ENCODE measurements at regions of chrX and their contacts with region 1.

Region 1: DNA sequence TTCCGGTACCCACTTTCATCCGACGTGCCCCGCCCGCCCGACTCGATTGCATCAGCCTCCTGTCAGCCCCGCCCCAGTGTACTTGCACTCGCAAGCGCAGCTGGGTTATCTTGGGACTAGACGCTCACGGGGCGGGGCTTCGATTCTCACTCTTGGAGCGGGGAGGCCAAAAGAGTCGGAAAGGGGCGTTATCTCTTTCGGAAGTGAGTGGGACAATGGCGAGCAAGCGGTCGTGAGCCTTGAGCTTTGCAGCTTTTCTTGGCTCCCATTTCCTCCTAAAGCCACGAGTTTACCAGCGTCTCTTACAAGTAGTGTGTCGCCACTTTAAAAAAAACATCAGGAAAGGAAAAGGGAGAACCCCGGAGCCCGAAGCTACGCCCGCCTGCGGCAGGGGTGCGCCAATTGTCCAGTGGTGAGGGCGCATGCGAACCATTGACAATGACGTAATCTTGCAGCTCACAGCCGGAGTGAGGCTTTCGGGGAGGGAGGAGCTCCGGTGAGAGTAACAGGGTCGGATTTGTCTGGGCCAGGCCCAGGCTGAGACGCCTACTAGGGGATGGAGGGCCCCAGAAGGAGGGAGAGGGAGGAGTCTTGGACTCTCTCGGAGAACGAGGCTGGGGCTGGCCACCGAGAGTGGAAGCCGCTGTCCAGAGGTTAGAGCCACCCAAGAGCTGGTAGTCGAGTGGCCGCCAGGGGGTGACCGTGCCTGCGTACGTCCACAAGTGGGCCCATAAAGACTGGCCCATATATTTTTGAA is 109.5 kb downstream of the GNL3L start:
- DNase-seq: peak; percentile 89 to 97 (median 97)
- H3K4me3 ChIP-seq: peak overlapping the region in 2 of 4 donors; percentile 13 to 51
- H3K27ac ChIP-seq: peak overlapping the region; percentile 77 to 93 (median 89)
- H3K4me1 ChIP-seq: no peaks in the 10 kb centered on the region
- H3K27me3 ChIP-seq: no peaks in the 10 kb centered on the region
- CTCF ChIP-seq: peak; percentile 53 to 75 (median 68)
- POLR2A ChIP-seq: peak; percentile 11 to 74

Region 2: DNA sequence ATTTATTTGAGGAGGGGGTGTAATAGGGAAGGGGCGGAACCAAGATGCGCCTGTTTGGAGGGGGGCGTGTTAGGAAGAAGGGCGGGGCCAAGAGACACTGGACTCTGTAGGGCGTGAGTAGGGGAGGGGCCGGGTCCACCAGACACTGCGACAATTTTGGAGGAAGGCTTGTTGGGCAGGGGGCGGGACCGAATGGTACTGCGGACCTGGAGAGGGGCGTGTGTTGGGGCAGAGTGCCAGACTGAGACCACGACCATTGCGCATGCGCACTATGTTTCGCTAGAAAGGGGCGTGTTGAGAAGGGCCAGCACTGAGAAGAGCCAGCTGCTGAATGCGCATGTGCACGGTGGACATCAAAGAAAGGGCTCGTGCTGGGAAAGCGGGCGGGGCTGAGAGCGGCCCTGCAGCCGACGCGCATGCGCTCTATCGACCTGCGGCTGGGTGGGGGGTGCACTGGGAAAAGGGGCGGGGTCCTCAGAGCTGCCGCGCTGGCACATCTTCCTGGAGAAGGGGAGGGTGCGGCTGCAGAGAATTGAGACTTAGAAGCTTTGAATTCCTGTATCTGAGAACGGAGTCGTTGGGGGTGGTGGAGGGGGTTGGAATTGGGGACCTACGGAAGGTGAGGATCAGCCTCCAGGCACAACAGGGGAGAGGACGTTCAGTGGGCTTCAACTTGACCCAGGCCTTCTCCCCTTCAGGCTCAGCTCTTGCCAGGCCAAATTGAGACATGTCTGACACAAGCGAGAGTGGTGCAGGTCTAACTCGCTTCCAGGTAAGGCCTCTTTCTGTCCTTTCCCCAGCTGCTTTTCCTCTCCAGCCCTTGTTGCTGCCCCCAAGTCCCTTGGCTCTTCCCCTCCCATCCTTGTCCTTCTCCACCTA is 169.3 kb after region 1 on chrX:
- intact Hi-C with region 1: loop called in 1 of 2 experiments (anchors 10 kb)
- DNase-seq: peak; percentile 90 to 97 (median 95)
- H3K4me3 ChIP-seq: peak overlapping the region in 3 of 4 donors; percentile 49 to 78 (median 70)
- H3K27ac ChIP-seq: peak overlapping the region in 4 of 5 donors; percentile 57 to 89 (median 76)
- H3K4me1 ChIP-seq: peaks cover 9 to 12% of the 10 kb centered on the region in 2 donors
- H3K27me3 ChIP-seq: no peaks in the 10 kb centered on the region
- CTCF ChIP-seq: no peak
- POLR2A ChIP-seq: peak in 1 of 2 donors; percentile 7